Thyroid gland (tissue), 4 donors: ENCODE measurements at regions of chr6 and their contacts with region 1.

Region 1: GRCh38 chr6:142692942-142693341 is 252.0 kb downstream of the HIVEP2 start:
- DNase-seq: peak; percentile 55 to 60
- H3K4me3 ChIP-seq: no peak overlapping the region
- H3K27ac ChIP-seq: no peak overlapping the region
- H3K4me1 ChIP-seq: peaks cover 0 to 5% of the 10 kb centered on the region in 2 donors
- H3K27me3 ChIP-seq: no peaks in the 10 kb centered on the region
- CTCF ChIP-seq: peak; percentile 66 to 97 (median 86)
- POLR2A ChIP-seq: no peak

Region 2: DNA sequence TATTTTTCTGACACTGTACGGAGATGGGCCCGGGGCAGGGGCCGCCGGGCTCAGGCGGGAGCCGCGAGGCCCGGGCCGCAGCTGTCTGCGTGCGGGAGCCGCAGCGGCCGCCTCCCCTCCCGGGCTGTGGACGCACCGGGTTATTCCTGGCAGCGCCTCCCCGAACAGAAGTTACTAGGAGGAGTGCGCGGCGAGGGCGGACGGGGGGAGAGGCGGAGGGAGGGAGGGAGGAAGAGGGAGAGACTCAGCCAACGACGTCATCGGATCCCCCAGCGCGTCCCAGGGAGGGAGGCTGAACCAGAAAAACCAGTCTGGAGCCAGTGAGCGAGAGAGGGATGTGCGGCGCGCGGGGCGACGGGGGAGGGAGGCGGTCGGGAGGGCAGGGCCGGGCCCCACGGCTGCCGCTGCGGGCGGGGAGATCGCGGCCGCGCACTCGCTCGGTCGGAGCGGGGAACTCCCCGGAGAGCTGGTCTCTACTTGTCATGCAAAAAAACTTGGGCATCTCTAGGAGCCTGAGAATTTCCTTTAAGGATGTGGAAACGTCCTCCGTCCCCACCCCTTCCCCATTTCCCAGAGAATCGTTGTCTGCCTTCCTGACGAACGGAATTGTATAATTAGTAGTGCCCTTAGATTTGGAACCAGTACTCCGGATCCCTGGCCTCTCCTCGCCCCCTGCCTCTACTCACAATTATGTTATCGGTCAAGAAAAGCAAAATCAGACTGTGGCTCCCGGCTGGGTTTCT is 253.4 kb after region 1 on chr6:
- intact Hi-C with region 1: loop called (anchors 5 kb)
- DNase-seq: peak; percentile 99
- H3K4me3 ChIP-seq: peak overlapping the region; percentile 46 to 95 (median 83)
- H3K27ac ChIP-seq: peak overlapping the region; percentile 97 to 99 (median 98)
- H3K4me1 ChIP-seq: peaks cover 11% of the 10 kb centered on the region in 2 donors
- H3K27me3 ChIP-seq: no peaks in the 10 kb centered on the region
- CTCF ChIP-seq: no peak
- POLR2A ChIP-seq: peak; percentile 28 to 94

Region 3: GRCh38 chr6:143026696-143027449 is 333.9 kb after region 1 on chr6:
- intact Hi-C with region 1: loop called (anchors 2 kb)
- DNase-seq: peak; percentile 52 to 64
- H3K4me3 ChIP-seq: no peak overlapping the region
- H3K27ac ChIP-seq: no peak overlapping the region
- H3K4me1 ChIP-seq: peaks cover 0 to 4% of the 10 kb centered on the region in 2 donors
- H3K27me3 ChIP-seq: no peaks in the 10 kb centered on the region
- CTCF ChIP-seq: peak; percentile 10 to 75 (median 62)
- POLR2A ChIP-seq: no peak

Region 4: DNA sequence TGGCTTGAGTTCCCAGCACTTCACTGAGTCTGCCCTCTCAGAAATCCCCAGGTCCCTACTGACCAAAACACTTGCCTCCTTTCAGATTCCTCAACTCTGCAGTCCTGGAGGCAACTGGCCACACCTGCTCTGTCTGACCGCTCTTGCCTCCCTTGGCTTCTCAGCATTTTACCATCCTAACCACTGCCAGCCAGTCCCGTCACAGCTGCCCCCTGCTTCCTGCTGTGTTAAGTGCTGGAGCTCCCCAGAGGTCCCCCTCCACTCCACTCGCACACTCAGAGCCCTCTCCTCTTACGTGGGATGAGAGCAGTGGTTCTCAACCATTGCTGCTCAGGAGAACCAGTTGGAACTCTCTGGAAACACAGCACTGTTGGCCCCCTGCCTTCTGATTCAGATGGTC is 737.0 kb after region 1 on chr6:
- intact Hi-C with region 1: loop called (anchors 5 kb)
- DNase-seq: no peak
- H3K4me3 ChIP-seq: no peak overlapping the region
- H3K27ac ChIP-seq: no peak overlapping the region
- H3K4me1 ChIP-seq: no peaks in the 10 kb centered on the region
- H3K27me3 ChIP-seq: no peaks in the 10 kb centered on the region
- CTCF ChIP-seq: no peak
- POLR2A ChIP-seq: no peak